ENCODE measurements at regions of chr20 and their contacts with region 1.

Region 1: GRCh38 chr20:51966291-51966971 is 164.1 kb upstream of the SALL4 start:
- DNase-seq: peak; percentile 81
- ATAC-seq: peak; percentile 99
- H3K4me3 ChIP-seq: no peak overlapping the region
- H3K27ac ChIP-seq: no peak overlapping the region
- H3K4me1 ChIP-seq: peaks cover 7 to 21% of the 10 kb centered on the region in 2 experiments; a peak in 3 of 4 replicates
- H3K27me3 ChIP-seq: no peaks in the 10 kb centered on the region
- CTCF ChIP-seq: peak; percentile 66 to 90 (median 75); a peak in 5 of 6 replicates
- POLR2A ChIP-seq: no peak
- RAD21 ChIP-seq: peak; percentile 77

Region 2: GRCh38 chr20:51639206-51639832 is 327.1 kb before region 1 on chr20:
- CTCF ChIA-PET with region 1: no interaction called
- POLR2A ChIA-PET with region 1: no interaction called
- RAD21 ChIA-PET with region 1: no interaction called
- intact Hi-C with region 1: loop called (anchors 1 kb)
- DNase-seq: peak; percentile 52
- ATAC-seq: peak; percentile 85
- H3K4me3 ChIP-seq: peak overlapping the region in 1 of 2 experiments; percentile 26; a peak in 1 of 4 replicates
- H3K27ac ChIP-seq: no peak overlapping the region
- H3K4me1 ChIP-seq: peaks cover 10 to 49% of the 10 kb centered on the region in 2 experiments; a peak in 3 of 4 replicates
- H3K27me3 ChIP-seq: no peaks in the 10 kb centered on the region
- CTCF ChIP-seq: peak; percentile 74 to 86 (median 84); a peak in 5 of 6 replicates
- POLR2A ChIP-seq: no peak
- RAD21 ChIP-seq: peak; percentile 94

Region 3: GRCh38 chr20:51978081-51978501 is 11.7 kb after region 1 on chr20:
- CTCF ChIA-PET with region 1: interaction called, 10 read pairs
- POLR2A ChIA-PET with region 1: interaction called, 3 read pairs
- RAD21 ChIA-PET with region 1: no interaction called
- intact Hi-C with region 1: no loop called
- DNase-seq: no peak
- ATAC-seq: no peak
- H3K4me3 ChIP-seq: no peak overlapping the region
- H3K27ac ChIP-seq: no peak overlapping the region
- H3K4me1 ChIP-seq: no peaks in the 10 kb centered on the region
- H3K27me3 ChIP-seq: no peaks in the 10 kb centered on the region
- CTCF ChIP-seq: no peak
- POLR2A ChIP-seq: no peak
- RAD21 ChIP-seq: no peak